ENCODE measurements at regions of chr3 and their contacts with region 1.

Region 1: GRCh38 chr3:15557511-15557946 is 36.0 kb upstream of the COLQ start:
- DNase-seq: peak; percentile 58
- H3K4me3 ChIP-seq: no peak overlapping the region
- H3K27ac ChIP-seq: 0 out of 4 replicates have a peak overlapping the region, but pooled peaks of 1 of the 2 experiments have one; percentile 7
- H3K4me1 ChIP-seq: no peaks in the 10 kb centered on the region
- H3K27me3 ChIP-seq: no peaks in the 10 kb centered on the region
- CTCF ChIP-seq: peak; percentile 77
- EP300 ChIP-seq: no peak
- RAD21 ChIP-seq: peak; percentile 82

Region 2: DNA sequence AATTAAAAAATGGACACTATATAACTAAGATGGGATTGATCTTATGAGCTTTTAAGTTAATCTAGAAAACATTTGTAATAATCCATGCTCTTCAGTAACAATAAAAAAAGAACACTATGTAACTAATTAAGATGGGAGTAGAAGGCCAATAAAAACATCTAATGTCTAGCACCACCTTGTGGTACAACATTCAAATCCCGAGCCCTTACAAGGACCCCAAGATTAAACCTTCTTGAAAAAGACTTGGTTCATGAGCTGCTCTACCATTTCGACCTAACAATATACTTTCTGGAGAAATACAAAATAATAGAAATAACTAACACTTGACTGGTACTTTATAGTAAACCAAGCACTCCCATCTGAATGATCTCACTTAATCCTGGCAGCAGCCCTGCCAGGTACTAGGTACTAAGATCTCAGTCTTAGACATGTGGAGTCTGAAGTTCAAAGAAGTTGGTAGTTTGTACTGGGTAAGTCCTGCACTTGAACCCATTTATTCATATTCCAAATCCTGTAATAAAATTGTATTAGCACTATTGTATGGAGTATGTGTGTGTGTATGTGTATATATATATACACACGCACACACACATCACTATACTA is 152.0 kb before region 1 on chr3:
- CTCF ChIA-PET with region 1: interaction called, 17 read pairs
- POLR2A ChIA-PET with region 1: no interaction called
- DNase-seq: peak; percentile 51
- H3K4me3 ChIP-seq: no peak overlapping the region; a peak in 1 of 4 replicates
- H3K27ac ChIP-seq: no peak overlapping the region
- H3K4me1 ChIP-seq: no peaks in the 10 kb centered on the region
- H3K27me3 ChIP-seq: no peaks in the 10 kb centered on the region
- CTCF ChIP-seq: peak; percentile 82
- EP300 ChIP-seq: no peak
- RAD21 ChIP-seq: peak; percentile 65

Region 3: GRCh38 chr3:15431256-15431837 is 126.2 kb before region 1 on chr3:
- CTCF ChIA-PET with region 1: interaction called, 12 read pairs
- POLR2A ChIA-PET with region 1: no interaction called
- DNase-seq: no peak
- H3K4me3 ChIP-seq: no peak overlapping the region
- H3K27ac ChIP-seq: no peak overlapping the region
- H3K4me1 ChIP-seq: peaks cover 9 to 13% of the 10 kb centered on the region in 2 experiments; a peak in 3 of 4 replicates
- H3K27me3 ChIP-seq: no peaks in the 10 kb centered on the region
- CTCF ChIP-seq: no peak
- EP300 ChIP-seq: no peak
- RAD21 ChIP-seq: no peak

Region 4: DNA sequence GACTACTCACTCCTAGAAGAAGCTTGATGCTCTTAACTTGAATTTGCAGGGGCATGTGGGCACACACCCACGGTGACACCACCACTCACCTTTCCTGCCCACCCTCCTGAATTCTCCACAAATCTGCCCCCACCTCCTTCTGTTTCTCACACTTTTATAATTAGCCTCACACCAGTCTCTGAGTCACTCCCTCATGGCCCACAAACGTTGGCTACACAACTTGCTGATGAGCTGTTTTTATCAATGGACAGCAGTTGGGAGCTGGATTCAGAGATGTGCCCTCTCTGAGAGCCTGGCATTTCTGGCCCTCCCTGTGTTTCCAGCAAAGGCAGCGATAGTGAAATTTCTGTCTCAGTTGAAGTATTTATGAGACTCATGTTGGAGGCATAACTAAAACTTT is 37.3 kb before region 1 on chr3:
- CTCF ChIA-PET with region 1: interaction called, 28 read pairs
- POLR2A ChIA-PET with region 1: no interaction called
- DNase-seq: no peak
- H3K4me3 ChIP-seq: no peak overlapping the region
- H3K27ac ChIP-seq: no peak overlapping the region
- H3K4me1 ChIP-seq: peaks cover 8 to 19% of the 10 kb centered on the region in 2 experiments; a peak in 2 of 4 replicates
- H3K27me3 ChIP-seq: no peaks in the 10 kb centered on the region
- CTCF ChIP-seq: no peak
- EP300 ChIP-seq: no peak
- RAD21 ChIP-seq: no peak

Region 5: GRCh38 chr3:15527031-15527459 is 30.5 kb before region 1 on chr3:
- CTCF ChIA-PET with region 1: interaction called, 44 read pairs
- POLR2A ChIA-PET with region 1: no interaction called
- DNase-seq: peak; percentile 84
- H3K4me3 ChIP-seq: no peak overlapping the region; a peak in 1 of 4 replicates
- H3K27ac ChIP-seq: peak overlapping the region in 1 of 2 experiments; percentile 87; a peak in 2 of 4 replicates
- H3K4me1 ChIP-seq: peaks cover 5 to 24% of the 10 kb centered on the region in 2 experiments; a peak in 3 of 4 replicates
- H3K27me3 ChIP-seq: no peaks in the 10 kb centered on the region
- CTCF ChIP-seq: peak; percentile 39
- EP300 ChIP-seq: peak in 1 of 2 experiments; percentile 97; a peak in 2 of 4 replicates
- RAD21 ChIP-seq: peak; percentile 81

Region 6: GRCh38 chr3:15572138-15572537 is 14.6 kb after region 1 on chr3:
- CTCF ChIA-PET with region 1: interaction called, 16 read pairs
- POLR2A ChIA-PET with region 1: interaction called, 6 read pairs
- DNase-seq: no peak
- H3K4me3 ChIP-seq: no peak overlapping the region
- H3K27ac ChIP-seq: no peak overlapping the region
- H3K4me1 ChIP-seq: peaks cover 0 to 2% of the 10 kb centered on the region in 2 experiments; a peak in 2 of 4 replicates
- H3K27me3 ChIP-seq: no peaks in the 10 kb centered on the region
- CTCF ChIP-seq: no peak
- EP300 ChIP-seq: no peak
- RAD21 ChIP-seq: no peak